Psoas muscle (tissue), 8 donors: ENCODE measurements at regions of chr6 and their contacts with region 1.

Region 1: GRCh38 chr6:121647905-121648304 is 212.5 kb downstream of the GJA1 start:
- DNase-seq: no peak
- ATAC-seq: no peak
- H3K4me3 ChIP-seq: no peak overlapping the region
- H3K27ac ChIP-seq: no peak overlapping the region
- H3K4me1 ChIP-seq: no peaks in the 10 kb centered on the region
- H3K27me3 ChIP-seq: no peaks in the 10 kb centered on the region
- CTCF ChIP-seq: no peak

Region 2: GRCh38 chr6:121771937-121772720 is 124.2 kb after region 1 on chr6:
- intact Hi-C with region 1: loop called in 1 of 2 experiments (anchors 5 kb)
- DNase-seq: no peak
- ATAC-seq: no peak
- H3K4me3 ChIP-seq: no peak overlapping the region
- H3K27ac ChIP-seq: no peak overlapping the region
- H3K4me1 ChIP-seq: no peaks in the 10 kb centered on the region
- H3K27me3 ChIP-seq: no peaks in the 10 kb centered on the region
- CTCF ChIP-seq: no peak